ENCODE measurements at regions of chr3 and their contacts with region 1.

Region 1: GRCh38 chr3:184380191-184380626 is 355 bp downstream of the CHRD start:
- DNase-seq: peak; percentile 21
- ATAC-seq: no peak
- H3K4me3 ChIP-seq: peak overlapping the region; percentile 59 to 79 (median 71); a peak in 4 of 6 replicates
- H3K27ac ChIP-seq: no peak overlapping the region
- H3K4me1 ChIP-seq: peaks cover 27% of the 10 kb centered on the region
- H3K27me3 ChIP-seq: no peaks in the 10 kb centered on the region; a peak in 1 of 5 replicates
- CTCF ChIP-seq: no peak
- EP300 ChIP-seq: no peak
- POLR2A ChIP-seq: peak in 1 of 2 experiments; percentile 37; a peak in 1 of 4 replicates
- RAD21 ChIP-seq: no peak

Region 2: GRCh38 chr3:184362668-184363540 is 17.3 kb before region 1 on chr3:
- CTCF ChIA-PET with region 1: no interaction called
- POLR2A ChIA-PET with region 1: interaction called, 15 read pairs
- in situ Hi-C with region 1: no loop called
- intact Hi-C with region 1: no loop called
- DNase-seq: peak; percentile 98
- ATAC-seq: peak; percentile 81
- H3K4me3 ChIP-seq: peak overlapping the region; percentile 93 to 96 (median 96)
- H3K27ac ChIP-seq: peak overlapping the region; percentile 97
- H3K4me1 ChIP-seq: peaks cover 55% of the 10 kb centered on the region
- H3K27me3 ChIP-seq: no peaks in the 10 kb centered on the region; a peak in 1 of 5 replicates
- CTCF ChIP-seq: peak; percentile 88
- EP300 ChIP-seq: peak; percentile 9 to 39; a peak in 1 of 4 replicates
- POLR2A ChIP-seq: peak in 1 of 2 experiments; percentile 70; a peak in 2 of 4 replicates
- RAD21 ChIP-seq: peak; percentile 74

Region 3: GRCh38 chr3:184452971-184453695 is 72.9 kb after region 1 on chr3:
- CTCF ChIA-PET with region 1: no interaction called
- POLR2A ChIA-PET with region 1: no interaction called
- in situ Hi-C with region 1: no loop called
- intact Hi-C with region 1: no loop called
- DNase-seq: no peak
- ATAC-seq: no peak
- H3K4me3 ChIP-seq: no peak overlapping the region
- H3K27ac ChIP-seq: no peak overlapping the region
- H3K4me1 ChIP-seq: no peaks in the 10 kb centered on the region
- H3K27me3 ChIP-seq: peaks cover 0 to 3% of the 10 kb centered on the region in 2 experiments; a peak in 1 of 5 replicates
- CTCF ChIP-seq: no peak
- EP300 ChIP-seq: no peak
- POLR2A ChIP-seq: no peak
- RAD21 ChIP-seq: no peak

Measured in HepG2 (cell line).